ENCODE measurements at regions of chr9 and their contacts with region 1.

Region 1: GRCh38 chr9:101311758-101312420 is 72.9 kb downstream of the BAAT start:
- DNase-seq: no peak
- ATAC-seq: peak; percentile 64
- H3K4me3 Mint-ChIP-seq: no peak overlapping the region
- H3K27ac Mint-ChIP-seq: no peak overlapping the region
- H3K4me1 Mint-ChIP-seq: no peaks in the 10 kb centered on the region
- H3K27me3 Mint-ChIP-seq: peaks cover 14% of the 10 kb centered on the region

Region 2: GRCh38 chr9:100601216-100601615 is 710.7 kb before region 1 on chr9:
- CTCF ChIA-PET with region 1: interaction called, 26 read pairs
- DNase-seq: peak; percentile 72
- ATAC-seq: peak; percentile 59
- H3K4me3 Mint-ChIP-seq: no peak overlapping the region
- H3K27ac Mint-ChIP-seq: no peak overlapping the region
- H3K4me1 Mint-ChIP-seq: peaks cover 17% of the 10 kb centered on the region
- H3K27me3 Mint-ChIP-seq: peaks cover 2% of the 10 kb centered on the region

Region 3: DNA sequence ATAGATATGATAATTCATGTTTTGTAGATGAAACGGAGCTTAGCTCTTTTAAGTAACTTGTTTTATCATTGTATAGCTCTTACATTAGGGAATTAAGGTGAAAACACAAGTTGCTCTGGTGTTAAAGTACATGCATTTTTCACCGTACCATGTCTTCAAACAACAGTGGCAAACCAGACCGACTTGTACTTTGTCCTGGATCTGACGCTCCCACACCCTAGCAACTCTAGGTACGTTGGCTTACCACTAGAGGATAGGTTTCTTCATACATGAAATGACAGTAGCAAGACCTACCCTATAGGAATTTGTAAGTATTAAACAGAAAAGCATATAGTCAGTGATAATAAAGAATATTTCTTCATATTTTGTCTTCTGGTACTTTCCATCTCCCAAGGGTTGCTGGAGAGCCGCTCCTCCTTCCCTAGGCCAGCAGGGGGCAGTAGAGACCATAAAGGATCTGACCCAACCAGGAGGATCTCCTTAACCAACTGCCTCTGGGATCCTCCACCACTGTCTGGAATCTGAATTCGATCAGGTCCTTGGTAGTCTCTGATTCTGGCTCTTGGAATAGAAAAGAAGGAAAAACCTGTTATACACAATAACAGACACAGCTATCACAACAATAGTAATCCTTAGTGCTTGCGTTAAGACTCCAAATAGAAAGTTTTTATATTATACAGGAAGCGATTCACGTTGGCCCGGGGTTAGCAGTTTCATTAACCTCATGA is 597.4 kb before region 1 on chr9:
- CTCF ChIA-PET with region 1: interaction called, 19 read pairs
- DNase-seq: peak; percentile 59
- ATAC-seq: peak; percentile 27
- H3K4me3 Mint-ChIP-seq: no peak overlapping the region
- H3K27ac Mint-ChIP-seq: no peak overlapping the region
- H3K4me1 Mint-ChIP-seq: no peaks in the 10 kb centered on the region
- H3K27me3 Mint-ChIP-seq: peaks cover under 1% of the 10 kb centered on the region

Measured in activated CD8-positive, alpha-beta memory T cell treated with anti-CD3 and anti-CD28 coated beads, Interleukin-2, amount 10 ng/mL, durations not matched to agents 7 days and 5 days (primary cell).